Activated CD4-positive, alpha-beta T cell treated with anti-CD3 and anti-CD28 coated beads, Interleukin-2, amount 10 ng/mL, durations not matched to agents 7 days and 5 days (primary cell): ENCODE measurements at regions of chrX and their contacts with region 1.

Region 1: DNA sequence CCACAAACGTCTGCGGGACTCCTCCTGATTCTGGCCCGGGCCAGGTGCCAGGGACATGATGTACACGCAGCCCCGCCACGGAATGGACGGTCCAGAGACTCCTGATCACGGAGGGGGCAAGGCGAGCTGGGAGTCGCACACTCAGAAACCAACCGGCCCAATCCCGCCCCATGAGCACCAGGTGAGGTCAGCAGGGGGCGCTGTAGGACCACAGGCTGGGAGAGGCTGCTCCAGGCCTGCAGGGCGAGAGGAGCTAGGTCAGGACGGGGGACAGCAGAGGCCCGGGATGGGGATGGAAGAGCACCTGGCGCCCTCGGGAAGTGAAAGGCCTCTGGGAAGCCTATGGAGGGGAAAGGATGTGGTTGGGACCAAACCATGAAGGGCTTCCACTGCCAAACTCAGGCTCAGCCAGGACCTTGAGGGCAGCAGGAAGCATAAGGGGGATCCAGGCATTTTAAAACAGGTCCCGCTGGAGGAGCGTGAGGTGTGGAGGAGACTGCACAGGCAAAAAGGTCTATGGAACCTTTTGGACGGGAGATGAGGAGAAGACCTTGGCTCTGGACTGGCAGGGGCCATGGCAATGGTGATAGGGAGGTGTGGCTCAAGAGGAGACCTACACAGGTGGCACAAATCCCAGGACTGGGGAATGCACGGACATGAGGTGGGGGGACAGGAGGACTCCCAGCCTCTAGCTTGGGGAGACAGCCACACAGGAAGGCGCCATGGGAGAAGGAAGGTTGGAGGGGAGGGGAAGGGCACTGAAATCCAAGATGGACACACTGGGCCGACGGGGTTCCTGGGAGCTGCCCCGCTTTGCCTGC is 79.2 kb downstream of the MTMR1 start:
- DNase-seq: peak; percentile 78
- H3K4me3 Mint-ChIP-seq: no peak overlapping the region
- H3K27ac Mint-ChIP-seq: no peak overlapping the region
- H3K4me1 Mint-ChIP-seq: no peaks in the 10 kb centered on the region
- H3K27me3 Mint-ChIP-seq: no peaks in the 10 kb centered on the region

Region 2: GRCh38 chrX:150372280-150372679 is 400.1 kb before region 1 on chrX:
- CTCF ChIA-PET with region 1: no interaction called
- POLR2A ChIA-PET with region 1: no interaction called
- DNase-seq: no peak
- H3K4me3 Mint-ChIP-seq: no peak overlapping the region
- H3K27ac Mint-ChIP-seq: no peak overlapping the region
- H3K4me1 Mint-ChIP-seq: no peaks in the 10 kb centered on the region
- H3K27me3 Mint-ChIP-seq: no peaks in the 10 kb centered on the region

Region 3: DNA sequence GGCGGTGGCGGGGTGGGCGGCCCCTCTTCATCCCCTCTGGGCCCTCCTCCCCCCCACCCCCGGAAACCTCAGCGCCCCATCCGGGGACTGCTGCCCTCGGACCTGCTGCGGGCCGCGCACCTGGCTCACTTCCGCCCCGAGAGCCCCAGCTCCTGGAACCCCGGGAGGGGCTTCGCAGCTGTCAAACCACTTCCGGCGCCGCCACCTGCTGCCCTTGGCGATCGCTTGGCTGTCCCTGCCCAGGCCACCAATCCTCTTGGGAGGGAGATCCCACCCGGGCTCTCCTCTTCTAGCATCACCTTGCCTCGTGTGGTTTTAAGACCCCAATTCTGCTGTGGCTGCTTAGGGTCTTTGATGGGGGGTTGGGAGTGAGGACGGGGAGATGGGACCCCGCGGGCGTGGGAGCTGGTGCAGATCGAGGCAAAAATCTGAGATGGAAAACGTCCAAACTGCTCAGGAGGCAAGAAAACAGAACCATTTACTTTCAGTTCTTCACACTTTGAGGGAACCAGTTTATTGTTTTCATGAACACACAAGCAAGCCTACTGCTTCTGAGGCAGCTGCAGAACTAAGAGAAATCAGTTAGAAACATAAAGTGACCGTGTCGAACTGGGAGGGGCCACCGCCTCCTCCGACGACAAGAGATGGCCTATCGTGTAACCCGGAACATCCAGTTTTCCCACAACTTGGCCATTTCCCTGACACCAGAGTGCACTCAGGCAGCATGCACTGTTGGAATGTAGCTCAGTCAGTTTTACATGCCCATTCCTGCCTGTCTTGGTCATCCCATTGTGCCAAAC is 78.4 kb before region 1 on chrX:
- CTCF ChIA-PET with region 1: no interaction called
- POLR2A ChIA-PET with region 1: no interaction called
- DNase-seq: peak; percentile 80
- H3K4me3 Mint-ChIP-seq: peak overlapping the region; percentile 94
- H3K27ac Mint-ChIP-seq: peak overlapping the region; percentile 99
- H3K4me1 Mint-ChIP-seq: peaks cover 56% of the 10 kb centered on the region
- H3K27me3 Mint-ChIP-seq: no peaks in the 10 kb centered on the region

Region 4: DNA sequence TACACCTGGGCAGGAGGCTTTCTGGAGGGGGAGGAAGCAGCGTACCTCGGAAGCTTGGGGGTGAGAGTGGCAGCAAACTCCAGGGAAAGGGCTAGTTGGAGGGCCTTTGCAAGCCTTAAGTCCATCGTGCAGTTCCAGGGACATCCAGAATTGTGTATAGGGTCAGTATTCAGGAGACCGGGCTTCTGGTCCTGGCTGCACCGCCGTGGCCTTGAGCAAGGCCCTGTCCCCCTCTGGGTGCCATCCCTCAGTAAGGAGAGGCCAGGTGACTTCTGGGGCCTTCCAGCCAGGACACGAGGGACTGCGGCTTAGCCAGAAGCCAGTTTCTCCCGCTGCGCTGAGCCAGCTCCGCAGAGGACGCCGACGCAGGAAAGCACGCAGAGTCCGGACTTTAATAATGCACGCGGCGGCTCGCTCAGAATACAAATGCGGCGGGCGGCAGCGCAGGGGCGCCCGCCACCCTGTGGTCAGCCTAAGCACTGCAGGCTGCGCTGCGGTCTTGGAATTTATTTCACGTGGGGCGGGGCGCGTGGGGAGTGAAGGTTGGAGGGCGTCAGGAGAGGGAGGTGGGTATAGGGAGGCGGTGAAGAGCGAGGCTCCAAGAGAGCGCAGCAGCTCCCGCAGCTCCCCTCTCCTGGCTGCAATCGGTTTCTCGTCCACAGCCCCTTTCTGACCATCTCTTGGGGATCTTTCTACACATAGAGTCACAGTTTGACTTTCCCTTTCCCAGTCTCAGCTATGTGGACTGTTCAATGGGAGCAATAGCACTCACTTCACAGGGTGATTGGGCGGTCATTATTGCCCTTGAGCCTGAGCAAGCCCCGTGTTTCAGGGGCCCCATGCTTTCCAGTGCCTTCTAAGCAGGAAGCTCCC is 310.0 kb after region 1 on chrX:
- CTCF ChIA-PET with region 1: interaction called, 20 read pairs
- POLR2A ChIA-PET with region 1: interaction called, 3 read pairs
- DNase-seq: peak; percentile 50
- H3K4me3 Mint-ChIP-seq: no peak overlapping the region
- H3K27ac Mint-ChIP-seq: no peak overlapping the region
- H3K4me1 Mint-ChIP-seq: peaks cover 1% of the 10 kb centered on the region
- H3K27me3 Mint-ChIP-seq: peaks cover 17% of the 10 kb centered on the region